Activated B cell treated with CpG ODN at 0.5 μM for 24 hours (primary cell): ENCODE measurements at regions of chr18 and their contacts with region 1.

Region 1: DNA sequence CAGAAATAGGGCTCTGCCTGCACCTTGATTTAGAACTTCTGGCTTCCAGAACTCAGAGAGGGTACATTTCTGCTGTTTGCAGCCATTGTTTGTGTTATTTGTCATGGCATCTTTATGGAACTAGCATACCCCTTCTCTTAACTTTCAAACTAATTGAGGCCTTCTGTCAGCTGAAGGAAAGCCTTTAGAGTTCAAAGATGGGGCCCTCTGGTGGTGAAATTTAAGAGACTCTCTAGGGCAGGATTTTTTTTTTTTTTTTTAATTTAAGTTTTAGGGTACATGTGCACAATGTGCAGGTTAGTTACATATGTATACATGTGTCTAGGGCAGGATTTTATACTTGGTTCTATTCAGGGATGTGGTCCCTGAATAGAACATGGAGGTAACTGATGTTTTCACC is 260.6 kb upstream of the LINC00305 start:
- DNase-seq: no peak
- ATAC-seq: no peak
- H3K4me3 Mint-ChIP-seq: no peak overlapping the region
- H3K27ac Mint-ChIP-seq: no peak overlapping the region
- H3K4me1 Mint-ChIP-seq: no peaks in the 10 kb centered on the region
- H3K27me3 Mint-ChIP-seq: no peaks in the 10 kb centered on the region
- CTCF ChIP-seq: no peak

Region 2: DNA sequence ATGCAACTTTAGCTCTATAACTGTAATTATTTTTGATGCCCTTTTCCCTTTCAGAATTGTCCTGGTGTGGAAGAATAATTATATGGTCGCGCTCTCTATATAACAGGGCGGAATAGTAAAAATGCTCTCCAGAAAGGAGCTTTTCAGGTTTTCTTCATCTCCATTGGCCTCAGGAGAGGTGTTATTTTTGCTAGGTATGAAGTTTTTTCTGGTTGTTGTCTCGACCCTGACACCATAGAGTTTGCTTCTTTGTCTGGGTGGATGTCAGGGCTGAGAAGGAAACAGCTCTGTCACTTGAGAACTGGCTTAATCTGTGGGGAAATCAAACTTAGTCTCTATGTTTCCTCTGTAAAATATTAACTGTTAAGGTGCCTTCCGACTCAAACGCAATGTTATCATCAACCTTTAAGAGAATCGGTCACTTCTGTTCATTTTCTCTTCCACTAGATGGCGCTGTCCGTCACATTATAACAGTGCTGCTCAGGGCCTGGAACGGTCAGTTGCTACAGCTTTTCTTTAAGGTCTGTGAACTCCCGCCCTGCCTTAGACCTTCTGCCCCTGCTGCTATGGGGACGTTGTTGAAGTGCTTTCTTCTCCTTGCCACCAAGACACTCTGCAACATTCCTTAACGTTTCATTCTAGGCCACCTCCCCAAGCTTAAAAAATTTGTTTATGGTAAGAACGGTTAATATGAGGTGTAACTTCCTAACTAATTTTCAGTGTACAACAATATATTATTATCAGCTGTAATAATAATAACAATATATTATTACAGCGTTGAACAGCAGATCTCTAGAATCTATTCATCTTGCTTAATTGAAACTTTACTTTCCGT is 891.1 kb before region 1 on chr18:
- CTCF ChIA-PET with region 1: interaction called, 3 read pairs
- POLR2A ChIA-PET with region 1: no interaction called
- intact Hi-C with region 1: loop called (anchors 1 kb)
- DNase-seq: no peak
- ATAC-seq: peak; percentile 60
- H3K4me3 Mint-ChIP-seq: no peak overlapping the region
- H3K27ac Mint-ChIP-seq: no peak overlapping the region
- H3K4me1 Mint-ChIP-seq: peaks cover 3% of the 10 kb centered on the region
- H3K27me3 Mint-ChIP-seq: peaks cover 9% of the 10 kb centered on the region
- CTCF ChIP-seq: no peak

Region 3: DNA sequence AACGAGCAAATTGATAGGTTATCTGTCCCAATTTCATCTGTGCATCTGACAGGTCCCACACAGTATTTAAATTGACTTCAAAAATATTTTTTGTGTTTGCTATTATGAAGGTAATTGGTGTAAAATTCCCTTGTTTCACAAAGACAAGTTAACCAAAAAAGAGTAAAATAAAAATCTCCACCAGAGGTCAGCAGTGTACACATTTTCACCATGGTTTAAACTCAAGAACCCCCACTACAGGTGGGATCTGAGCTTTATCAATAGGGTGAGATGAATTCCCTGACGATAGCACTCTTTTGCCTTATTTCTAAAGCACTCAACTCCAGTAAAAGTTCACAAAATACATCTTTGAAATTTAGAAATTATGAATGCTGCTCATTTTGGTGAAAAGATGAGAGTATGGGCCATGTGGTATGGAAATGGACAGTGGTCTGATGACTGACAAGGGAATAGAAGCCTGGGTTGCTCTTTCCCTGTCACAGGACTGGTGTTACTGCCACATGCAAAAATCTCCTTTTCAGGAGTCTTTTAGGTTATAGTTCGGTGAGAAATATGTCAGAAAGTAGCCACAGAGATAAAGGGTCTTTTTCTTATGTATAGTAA is 371.6 kb before region 1 on chr18:
- CTCF ChIA-PET with region 1: interaction called, 9 read pairs
- POLR2A ChIA-PET with region 1: no interaction called
- intact Hi-C with region 1: loop called (anchors 1 kb)
- DNase-seq: no peak
- ATAC-seq: peak; percentile 56
- H3K4me3 Mint-ChIP-seq: no peak overlapping the region
- H3K27ac Mint-ChIP-seq: no peak overlapping the region
- H3K4me1 Mint-ChIP-seq: no peaks in the 10 kb centered on the region
- H3K27me3 Mint-ChIP-seq: peaks cover 2% of the 10 kb centered on the region
- CTCF ChIP-seq: no peak

Region 4: DNA sequence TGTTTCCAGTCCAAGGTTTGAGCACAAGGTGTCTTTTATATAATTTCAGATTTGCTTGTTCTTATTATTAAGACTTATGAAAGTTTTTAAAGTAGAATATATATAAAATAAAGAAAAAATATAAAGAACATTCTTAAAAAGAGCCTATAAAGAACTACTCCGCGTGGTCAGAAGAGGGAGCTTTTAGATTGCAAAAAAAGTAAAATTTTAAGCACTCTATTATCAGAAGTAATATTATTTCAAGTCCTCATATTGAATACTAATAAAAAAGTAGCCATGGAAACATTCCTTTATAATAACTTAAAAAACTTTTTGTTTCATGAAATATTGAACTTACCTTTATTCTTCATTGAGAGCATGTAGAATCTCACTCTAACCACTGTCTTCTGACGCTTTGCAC is 312.0 kb before region 1 on chr18:
- CTCF ChIA-PET with region 1: interaction called, 5 read pairs
- POLR2A ChIA-PET with region 1: no interaction called
- intact Hi-C with region 1: loop called (anchors 1 kb)
- DNase-seq: no peak
- ATAC-seq: no peak
- H3K4me3 Mint-ChIP-seq: no peak overlapping the region
- H3K27ac Mint-ChIP-seq: no peak overlapping the region
- H3K4me1 Mint-ChIP-seq: peaks cover 3% of the 10 kb centered on the region
- H3K27me3 Mint-ChIP-seq: peaks cover 6% of the 10 kb centered on the region
- CTCF ChIP-seq: no peak

Region 5: GRCh38 chr18:64119916-64120315 is 289.6 kb before region 1 on chr18:
- CTCF ChIA-PET with region 1: interaction called, 28 read pairs
- POLR2A ChIA-PET with region 1: no interaction called
- intact Hi-C with region 1: loop called (anchors 2 kb)
- DNase-seq: no peak
- ATAC-seq: no peak
- H3K4me3 Mint-ChIP-seq: no peak overlapping the region
- H3K27ac Mint-ChIP-seq: no peak overlapping the region
- H3K4me1 Mint-ChIP-seq: no peaks in the 10 kb centered on the region
- H3K27me3 Mint-ChIP-seq: no peaks in the 10 kb centered on the region
- CTCF ChIP-seq: no peak

Region 6: GRCh38 chr18:64244571-64244970 is 164.9 kb before region 1 on chr18:
- CTCF ChIA-PET with region 1: interaction called, 10 read pairs
- POLR2A ChIA-PET with region 1: no interaction called
- intact Hi-C with region 1: loop called (anchors 1 kb)
- DNase-seq: no peak
- ATAC-seq: no peak
- H3K4me3 Mint-ChIP-seq: no peak overlapping the region
- H3K27ac Mint-ChIP-seq: no peak overlapping the region
- H3K4me1 Mint-ChIP-seq: no peaks in the 10 kb centered on the region
- H3K27me3 Mint-ChIP-seq: peaks cover 2% of the 10 kb centered on the region
- CTCF ChIP-seq: no peak

Region 7: DNA sequence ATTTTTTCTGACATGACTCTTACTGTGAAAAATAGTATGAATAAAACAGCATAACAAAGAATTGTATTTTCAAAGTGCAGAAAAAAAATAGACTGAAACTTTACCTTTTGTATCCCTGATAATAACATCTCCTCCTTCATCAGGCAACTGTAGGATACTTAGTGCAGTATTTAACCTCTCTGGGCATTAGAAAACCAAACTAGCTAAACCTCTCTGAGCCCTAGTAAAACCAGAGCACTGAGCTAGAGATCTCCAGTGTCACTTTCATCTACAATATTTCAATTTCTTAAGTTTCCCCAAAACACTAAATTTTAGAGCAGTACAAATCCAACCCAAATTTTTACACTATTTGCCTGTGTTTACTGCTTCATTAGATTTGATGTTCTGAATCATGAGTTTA is 333.4 kb after region 1 on chr18:
- CTCF ChIA-PET with region 1: no interaction called
- POLR2A ChIA-PET with region 1: no interaction called
- intact Hi-C with region 1: no loop called
- DNase-seq: no peak
- ATAC-seq: no peak
- H3K4me3 Mint-ChIP-seq: no peak overlapping the region
- H3K27ac Mint-ChIP-seq: no peak overlapping the region
- H3K4me1 Mint-ChIP-seq: no peaks in the 10 kb centered on the region
- H3K27me3 Mint-ChIP-seq: no peaks in the 10 kb centered on the region
- CTCF ChIP-seq: no peak